ENCODE measurements at regions of chr5 and their contacts with region 1.

Region 1: DNA sequence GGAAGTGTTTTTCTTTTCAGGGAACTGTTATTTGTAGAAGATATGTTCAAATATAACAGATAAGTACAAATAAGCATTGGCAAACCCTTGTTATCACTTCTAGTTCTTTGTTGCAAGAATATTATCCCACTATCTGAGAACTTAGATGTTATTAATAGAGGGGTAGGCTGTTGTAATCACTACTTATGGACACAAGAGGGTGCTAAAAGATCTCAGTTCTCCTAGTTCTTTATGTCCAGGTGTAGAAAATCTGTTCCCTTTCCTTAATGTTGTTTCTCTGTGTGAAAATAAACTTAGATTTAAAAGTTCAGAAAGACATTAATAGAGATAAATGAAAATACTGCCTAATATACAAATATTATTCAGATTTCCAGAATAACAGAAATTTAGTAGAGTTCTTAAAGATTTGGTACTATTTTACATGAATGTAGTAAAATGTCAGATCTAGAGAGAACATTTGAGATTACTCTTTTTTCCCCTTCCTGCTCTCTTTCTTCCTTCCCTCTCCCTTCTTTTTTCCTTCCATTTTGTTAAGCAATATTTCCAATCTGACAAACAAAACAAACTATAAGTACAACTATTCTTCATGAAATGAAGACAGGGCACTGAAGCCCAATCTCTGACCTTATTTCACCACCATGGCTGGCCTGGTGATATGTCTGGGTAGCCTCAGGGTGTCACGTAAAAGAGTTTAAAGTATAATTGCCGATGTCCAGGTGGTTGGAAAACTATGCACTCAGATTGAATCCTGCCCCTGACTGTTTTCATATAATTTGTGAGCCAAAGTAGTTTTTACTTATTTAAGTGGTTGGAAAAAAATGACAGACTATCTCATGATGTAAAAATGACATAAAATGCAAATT is 43.6 kb upstream of the C5orf46 start:
- DNase-seq: no peak
- H3K4me3 ChIP-seq: no peak overlapping the region
- H3K27ac ChIP-seq: no peak overlapping the region
- H3K4me1 ChIP-seq: no peaks in the 10 kb centered on the region
- H3K27me3 ChIP-seq: no peaks in the 10 kb centered on the region
- CTCF ChIP-seq: peak in 2 of 3 donors; percentile 60 to 81
- POLR2A ChIP-seq: no peak

Region 2: GRCh38 chr5:147963948-147964693 is 14.2 kb after region 1 on chr5:
- intact Hi-C with region 1: loop called (anchors 2 kb)
- DNase-seq: no peak
- H3K4me3 ChIP-seq: no peak overlapping the region
- H3K27ac ChIP-seq: peak overlapping the region in 1 of 2 donors; percentile 34
- H3K4me1 ChIP-seq: no peaks in the 10 kb centered on the region
- H3K27me3 ChIP-seq: no peaks in the 10 kb centered on the region
- CTCF ChIP-seq: no peak
- POLR2A ChIP-seq: no peak

Region 3: DNA sequence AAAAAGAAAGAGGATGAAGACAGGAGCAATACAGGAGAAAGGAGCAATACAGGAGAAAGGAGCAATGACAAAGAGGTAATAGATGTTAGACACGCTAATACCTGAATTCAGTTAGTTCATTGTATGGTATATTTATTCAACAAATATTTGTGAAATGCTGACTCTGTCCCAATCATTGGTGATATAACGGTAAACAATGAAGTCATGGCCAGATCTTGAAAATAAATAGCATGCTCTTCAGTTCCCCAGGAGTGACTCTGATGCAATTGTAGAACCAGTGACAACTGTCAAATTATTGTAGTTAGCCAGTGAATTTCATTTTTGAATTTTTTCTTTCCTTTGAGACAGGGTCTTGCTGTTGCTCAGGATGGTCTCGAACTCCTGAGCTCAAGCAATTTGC is 170.4 kb after region 1 on chr5:
- intact Hi-C with region 1: loop called (anchors 5 kb)
- DNase-seq: no peak
- H3K4me3 ChIP-seq: no peak overlapping the region
- H3K27ac ChIP-seq: no peak overlapping the region
- H3K4me1 ChIP-seq: no peaks in the 10 kb centered on the region
- H3K27me3 ChIP-seq: no peaks in the 10 kb centered on the region
- CTCF ChIP-seq: no peak
- POLR2A ChIP-seq: no peak

Measured in breast epithelium (tissue), 4 donors.